CD8-positive, alpha-beta T cell (primary cell): ENCODE measurements at regions of chr12 and their contacts with region 1.

Region 1: GRCh38 chr12:91382081-91382543 is 199.5 kb upstream of the DCN start:
- DNase-seq: peak; percentile 72 to 93 (median 85)
- ATAC-seq: peak; percentile 85
- H3K4me3 ChIP-seq: peak overlapping the region in 1 of 2 experiments; percentile 24
- H3K4me3 Mint-ChIP-seq: peak overlapping the region; percentile 76
- H3K27ac ChIP-seq: no peak overlapping the region
- H3K27ac Mint-ChIP-seq: peak overlapping the region; percentile 80
- H3K4me1 ChIP-seq: peaks cover 4% of the 10 kb centered on the region
- H3K4me1 Mint-ChIP-seq: peaks cover 10% of the 10 kb centered on the region
- H3K27me3 ChIP-seq: peaks cover 0 to 2% of the 10 kb centered on the region in 2 experiments
- H3K27me3 Mint-ChIP-seq: peaks cover 2% of the 10 kb centered on the region
- CTCF ChIP-seq: peak; percentile 84

Region 2: GRCh38 chr12:91355150-91356006 is 26.7 kb before region 1 on chr12:
- CTCF ChIA-PET with region 1: interaction called, 12 read pairs
- POLR2A ChIA-PET with region 1: no interaction called
- intact Hi-C with region 1: no loop called
- DNase-seq: peak in 8 of 9 experiments; percentile 4 to 63 (median 38)
- ATAC-seq: peak; percentile 82
- H3K4me3 ChIP-seq: no peak overlapping the region
- H3K4me3 Mint-ChIP-seq: no peak overlapping the region
- H3K27ac ChIP-seq: no peak overlapping the region
- H3K27ac Mint-ChIP-seq: no peak overlapping the region
- H3K4me1 ChIP-seq: no peaks in the 10 kb centered on the region
- H3K4me1 Mint-ChIP-seq: no peaks in the 10 kb centered on the region
- H3K27me3 ChIP-seq: no peaks in the 10 kb centered on the region
- H3K27me3 Mint-ChIP-seq: peaks cover 15% of the 10 kb centered on the region
- CTCF ChIP-seq: peak; percentile 58

Region 3: DNA sequence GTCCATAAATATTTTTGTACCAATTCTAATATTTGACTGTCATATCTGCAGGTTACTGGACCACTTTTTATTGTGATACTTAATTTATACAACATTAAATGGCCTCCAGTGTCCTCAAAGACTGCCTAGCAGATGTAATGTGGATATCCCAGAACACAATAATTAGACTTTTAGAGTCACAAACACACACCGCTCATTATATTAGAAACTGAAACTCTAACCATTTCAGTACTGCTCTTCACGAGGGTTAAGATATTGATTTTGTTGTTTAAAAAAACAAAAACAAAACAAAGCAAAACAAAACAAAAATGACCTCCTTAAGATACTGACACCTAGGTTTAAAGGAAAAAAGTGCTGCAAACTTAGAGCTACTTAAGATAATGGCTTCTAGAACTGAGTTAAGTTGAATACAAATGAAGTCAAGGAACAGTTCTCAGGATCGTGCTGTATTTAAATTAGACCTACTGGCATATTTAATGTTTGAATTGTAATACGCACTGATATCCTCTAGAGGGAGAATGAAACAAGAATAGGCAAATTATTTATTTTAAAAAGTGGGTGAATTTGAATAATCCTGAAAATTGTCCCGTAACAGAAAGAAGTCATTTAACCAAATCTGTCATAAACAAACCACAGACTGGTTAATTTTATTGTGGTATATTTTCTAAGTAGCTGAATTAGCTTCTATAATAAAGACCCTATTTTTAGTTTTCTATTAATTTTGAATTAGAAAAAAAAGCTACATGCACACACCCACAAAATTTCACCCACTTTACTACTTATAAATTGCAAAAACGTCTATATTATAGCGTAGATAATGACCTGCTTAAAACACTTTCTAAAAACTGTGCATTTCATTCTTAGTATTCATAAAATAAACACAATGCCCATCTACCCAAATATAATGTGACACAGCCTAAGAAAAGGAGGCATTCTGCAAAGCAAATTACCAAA is 195.8 kb after region 1 on chr12:
- CTCF ChIA-PET with region 1: interaction called, 4 read pairs
- POLR2A ChIA-PET with region 1: no interaction called
- intact Hi-C with region 1: loop called in 1 of 2 experiments (anchors 5 kb)
- DNase-seq: peak in 2 of 9 experiments; percentile 37 to 59
- ATAC-seq: peak; percentile 85
- H3K4me3 ChIP-seq: peak overlapping the region; percentile 34 to 39
- H3K4me3 Mint-ChIP-seq: peak overlapping the region; percentile 77
- H3K27ac ChIP-seq: no peak overlapping the region
- H3K27ac Mint-ChIP-seq: peak overlapping the region; percentile 50
- H3K4me1 ChIP-seq: no peaks in the 10 kb centered on the region
- H3K4me1 Mint-ChIP-seq: peaks cover 14% of the 10 kb centered on the region
- H3K27me3 ChIP-seq: no peaks in the 10 kb centered on the region
- H3K27me3 Mint-ChIP-seq: no peaks in the 10 kb centered on the region
- CTCF ChIP-seq: peak; percentile 87

Region 4: GRCh38 chr12:91985002-91985787 is 603.1 kb after region 1 on chr12:
- CTCF ChIA-PET with region 1: interaction called, 3 read pairs
- POLR2A ChIA-PET with region 1: no interaction called
- intact Hi-C with region 1: loop called in 1 of 2 experiments (anchors 5 kb)
- DNase-seq: peak in 4 of 9 experiments; percentile 20 to 48 (median 27)
- ATAC-seq: peak; percentile 62
- H3K4me3 ChIP-seq: no peak overlapping the region
- H3K4me3 Mint-ChIP-seq: peak overlapping the region; percentile 32
- H3K27ac ChIP-seq: no peak overlapping the region
- H3K27ac Mint-ChIP-seq: peak overlapping the region; percentile 78
- H3K4me1 ChIP-seq: peaks cover 20% of the 10 kb centered on the region
- H3K4me1 Mint-ChIP-seq: peaks cover 59% of the 10 kb centered on the region
- H3K27me3 ChIP-seq: no peaks in the 10 kb centered on the region
- H3K27me3 Mint-ChIP-seq: no peaks in the 10 kb centered on the region
- CTCF ChIP-seq: no peak

Region 5: GRCh38 chr12:92562063-92562734 is 1180.1 kb after region 1 on chr12:
- CTCF ChIA-PET with region 1: interaction called, 92 read pairs
- POLR2A ChIA-PET with region 1: no interaction called
- intact Hi-C with region 1: no loop called
- DNase-seq: no peak
- ATAC-seq: no peak
- H3K4me3 ChIP-seq: no peak overlapping the region
- H3K4me3 Mint-ChIP-seq: no peak overlapping the region
- H3K27ac ChIP-seq: no peak overlapping the region
- H3K27ac Mint-ChIP-seq: no peak overlapping the region
- H3K4me1 ChIP-seq: peaks cover 4% of the 10 kb centered on the region
- H3K4me1 Mint-ChIP-seq: peaks cover 25% of the 10 kb centered on the region
- H3K27me3 ChIP-seq: no peaks in the 10 kb centered on the region
- H3K27me3 Mint-ChIP-seq: no peaks in the 10 kb centered on the region
- CTCF ChIP-seq: no peak

Region 6: GRCh38 chr12:92649511-92650227 is 1267.6 kb after region 1 on chr12:
- CTCF ChIA-PET with region 1: interaction called, 57 read pairs
- POLR2A ChIA-PET with region 1: no interaction called
- intact Hi-C with region 1: loop called (anchors 1 kb)
- DNase-seq: peak; percentile 29 to 85 (median 63)
- ATAC-seq: peak; percentile 90
- H3K4me3 ChIP-seq: no peak overlapping the region
- H3K4me3 Mint-ChIP-seq: no peak overlapping the region
- H3K27ac ChIP-seq: no peak overlapping the region
- H3K27ac Mint-ChIP-seq: no peak overlapping the region
- H3K4me1 ChIP-seq: no peaks in the 10 kb centered on the region
- H3K4me1 Mint-ChIP-seq: peaks cover 6% of the 10 kb centered on the region
- H3K27me3 ChIP-seq: no peaks in the 10 kb centered on the region
- H3K27me3 Mint-ChIP-seq: no peaks in the 10 kb centered on the region
- CTCF ChIP-seq: peak; percentile 68